IMR-90 (cell line): ENCODE measurements at regions of chr5 and their contacts with region 1.

Region 1: DNA sequence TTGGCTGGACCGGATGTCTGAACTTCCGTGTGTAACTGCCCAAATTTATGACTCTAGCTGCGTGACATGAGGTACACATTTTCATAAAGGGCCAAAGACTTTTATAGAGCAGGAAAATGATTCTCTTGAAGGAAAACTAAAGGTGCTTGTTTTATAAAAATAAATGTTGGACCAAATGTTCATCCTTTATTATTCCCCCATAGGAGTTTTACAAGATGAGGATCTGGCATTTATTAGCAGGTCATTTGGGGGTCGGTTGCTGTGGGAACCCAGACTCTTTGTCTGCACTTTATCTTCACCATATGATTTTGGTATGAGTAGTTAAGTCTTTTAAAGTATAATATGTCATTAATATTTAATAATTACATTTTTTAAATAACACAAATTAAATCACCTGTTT is 571.2 kb downstream of the EFNA5 start:
- DNase-seq: no peak
- ATAC-seq: no peak
- H3K4me3 ChIP-seq: no peak overlapping the region
- H3K27ac ChIP-seq: no peak overlapping the region
- H3K4me1 ChIP-seq: no peaks in the 10 kb centered on the region
- H3K27me3 ChIP-seq: no peaks in the 10 kb centered on the region
- CTCF ChIP-seq: no peak
- POLR2A ChIP-seq: no peak
- RAD21 ChIP-seq: no peak

Region 2: DNA sequence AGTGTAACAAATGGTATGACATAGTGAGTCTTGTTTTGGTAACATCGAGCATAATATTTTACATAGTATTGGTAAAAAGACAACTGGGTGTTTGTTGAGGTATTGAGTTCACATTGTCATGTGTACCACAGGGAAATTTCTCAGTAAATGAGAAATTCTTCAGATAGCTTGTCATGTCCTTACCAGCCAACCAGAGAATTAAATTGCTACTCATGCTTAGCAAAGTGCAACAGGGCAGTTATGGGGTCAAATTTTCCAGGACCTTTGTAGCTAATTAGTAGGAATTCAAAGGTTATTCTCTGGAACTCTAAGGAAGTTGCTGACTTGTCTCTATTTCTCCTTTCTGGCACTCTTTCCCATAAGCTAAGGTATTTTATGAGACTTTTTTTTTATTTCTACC is 24.5 kb before region 1 on chr5:
- CTCF ChIA-PET with region 1: no interaction called
- POLR2A ChIA-PET with region 1: no interaction called
- dilution Hi-C with region 1: no loop called
- in situ Hi-C with region 1: no loop called
- intact Hi-C with region 1: no loop called
- DNase-seq: no peak
- ATAC-seq: no peak
- H3K4me3 ChIP-seq: no peak overlapping the region
- H3K27ac ChIP-seq: no peak overlapping the region
- H3K4me1 ChIP-seq: no peaks in the 10 kb centered on the region
- H3K27me3 ChIP-seq: no peaks in the 10 kb centered on the region
- CTCF ChIP-seq: no peak
- POLR2A ChIP-seq: no peak
- RAD21 ChIP-seq: no peak

Region 3: GRCh38 chr5:108168915-108169314 is 1069.4 kb after region 1 on chr5:
- CTCF ChIA-PET with region 1: no interaction called
- POLR2A ChIA-PET with region 1: no interaction called
- dilution Hi-C with region 1: no loop called
- in situ Hi-C with region 1: no loop called
- intact Hi-C with region 1: loop called (anchors 2 kb)
- DNase-seq: no peak
- ATAC-seq: no peak
- H3K4me3 ChIP-seq: no peak overlapping the region
- H3K27ac ChIP-seq: no peak overlapping the region
- H3K4me1 ChIP-seq: no peaks in the 10 kb centered on the region
- H3K27me3 ChIP-seq: no peaks in the 10 kb centered on the region
- CTCF ChIP-seq: no peak
- POLR2A ChIP-seq: no peak
- RAD21 ChIP-seq: no peak